CD4-positive, alpha-beta memory T cell (primary cell): ENCODE measurements at regions of chr6 and their contacts with region 1.

Region 1: GRCh38 chr6:43308101-43308989 is at the start of gene CRIP3:
- DNase-seq: peak; percentile 42 to 63 (median 46)
- H3K4me3 ChIP-seq: peak within 1 kb of the TSS; percentile 42 to 43
- H3K4me3 Mint-ChIP-seq: peak within 1 kb of the TSS; percentile 75 to 89 (median 84)
- H3K27ac ChIP-seq: no peak within 1 kb of the TSS
- H3K27ac Mint-ChIP-seq: peak within 1 kb of the TSS in 6 of 7 donors; percentile 17 to 88 (median 52)
- H3K4me1 ChIP-seq: peaks cover 14% of the 10 kb centered on the region
- H3K4me1 Mint-ChIP-seq: peaks cover 3 to 12% (median 8%) of the 10 kb centered on the region in 4 donors
- H3K27me3 ChIP-seq: no peaks in the 10 kb centered on the region
- H3K27me3 Mint-ChIP-seq: no peaks in the 10 kb centered on the region
- total RNA-seq, gene CRIP3: 1.9 to 3.0 TPM

Region 2: GRCh38 chr6:43129434-43130194 is 178.7 kb before region 1 on chr6:
- CTCF ChIA-PET with region 1: no interaction called
- POLR2A ChIA-PET with region 1: no interaction called
- intact Hi-C with region 1: no loop called
- DNase-seq: peak in 1 of 5 donors; percentile 6
- H3K4me3 ChIP-seq: no peak overlapping the region
- H3K4me3 Mint-ChIP-seq: no peak overlapping the region
- H3K27ac ChIP-seq: no peak overlapping the region
- H3K27ac Mint-ChIP-seq: peak overlapping the region in 1 of 7 donors; percentile 17
- H3K4me1 ChIP-seq: no peaks in the 10 kb centered on the region
- H3K4me1 Mint-ChIP-seq: no peaks in the 10 kb centered on the region
- H3K27me3 ChIP-seq: no peaks in the 10 kb centered on the region
- H3K27me3 Mint-ChIP-seq: peaks cover 0 to 2% of the 10 kb centered on the region in 2 donors

Region 3: DNA sequence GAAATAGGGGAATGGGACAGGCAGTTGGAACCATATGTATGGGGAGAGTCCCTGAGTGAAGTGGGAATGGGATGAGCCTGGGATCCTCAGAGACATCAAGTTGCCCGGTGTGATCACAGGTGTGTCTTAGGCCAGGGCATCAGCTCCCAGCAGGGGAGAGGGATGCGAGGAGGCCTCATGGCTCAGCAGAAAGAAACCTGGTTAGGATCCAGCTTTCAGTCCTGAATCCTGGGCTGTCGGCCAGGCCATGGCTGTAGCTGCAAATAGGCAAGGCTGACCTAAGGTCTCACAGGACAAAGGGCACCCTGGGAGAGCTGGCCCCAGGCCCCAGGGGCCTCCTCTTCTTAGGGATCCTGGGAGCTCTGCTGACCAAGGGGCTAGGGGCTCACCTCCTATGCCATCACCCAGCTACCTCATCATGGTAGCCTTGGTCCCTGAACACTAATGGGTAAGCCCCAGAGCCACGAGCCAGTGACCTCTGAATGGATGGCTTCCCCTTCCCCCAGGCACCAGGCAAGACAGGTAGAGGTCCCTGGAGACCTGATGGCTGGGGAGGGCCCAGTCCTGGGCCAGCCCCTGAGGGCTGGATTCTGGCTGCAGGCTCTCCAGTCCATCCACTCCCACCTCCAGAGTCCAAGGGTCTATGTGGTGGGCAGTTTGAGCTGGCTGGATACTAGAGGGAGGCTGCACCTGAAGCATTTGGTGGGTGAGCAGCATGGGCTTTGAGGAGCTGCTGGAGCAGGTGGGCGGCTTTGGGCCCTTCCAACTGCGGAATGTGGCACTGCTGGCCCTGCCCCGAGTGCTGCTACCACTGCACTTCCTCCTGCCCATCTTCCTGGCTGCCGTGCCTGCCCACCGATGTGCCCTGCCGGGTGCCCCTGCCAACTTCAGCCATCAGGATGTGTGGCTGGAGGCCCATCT is 10.4 kb before region 1 on chr6 and contains the start of gene SLC22A7:
- CTCF ChIA-PET with region 1: interaction called, 18 read pairs
- POLR2A ChIA-PET with region 1: interaction called, 3 read pairs
- intact Hi-C with region 1: no loop called
- DNase-seq: no peak
- H3K4me3 ChIP-seq: no peak within 1 kb of the TSS
- H3K4me3 Mint-ChIP-seq: no peak within 1 kb of the TSS
- H3K27ac ChIP-seq: no peak within 1 kb of the TSS
- H3K27ac Mint-ChIP-seq: no peak within 1 kb of the TSS
- H3K4me1 ChIP-seq: no peaks in the 10 kb centered on the region
- H3K4me1 Mint-ChIP-seq: peaks cover 0 to 2% (median 0%) of the 10 kb centered on the region in 4 donors
- H3K27me3 ChIP-seq: no peaks in the 10 kb centered on the region
- H3K27me3 Mint-ChIP-seq: peaks cover 4 to 13% of the 10 kb centered on the region in 2 donors
- total RNA-seq, gene SLC22A7: not detected

Region 4: GRCh38 chr6:43334466-43335095 is 26.2 kb after region 1 on chr6:
- CTCF ChIA-PET with region 1: interaction called, 9 read pairs
- POLR2A ChIA-PET with region 1: interaction called, 3 read pairs
- intact Hi-C with region 1: loop called (anchors 2 kb)
- DNase-seq: peak in 1 of 5 donors; percentile 12
- H3K4me3 ChIP-seq: no peak overlapping the region
- H3K4me3 Mint-ChIP-seq: no peak overlapping the region
- H3K27ac ChIP-seq: no peak overlapping the region
- H3K27ac Mint-ChIP-seq: peak overlapping the region in 6 of 7 donors; percentile 36 to 88 (median 50)
- H3K4me1 ChIP-seq: peaks cover 17% of the 10 kb centered on the region
- H3K4me1 Mint-ChIP-seq: peaks cover 15 to 30% (median 17%) of the 10 kb centered on the region in 4 donors
- H3K27me3 ChIP-seq: no peaks in the 10 kb centered on the region
- H3K27me3 Mint-ChIP-seq: no peaks in the 10 kb centered on the region

Region 5: GRCh38 chr6:43361269-43361668 is 52.9 kb after region 1 on chr6:
- CTCF ChIA-PET with region 1: interaction called, 10 read pairs
- POLR2A ChIA-PET with region 1: no interaction called
- intact Hi-C with region 1: no loop called
- DNase-seq: no peak
- H3K4me3 ChIP-seq: no peak overlapping the region
- H3K4me3 Mint-ChIP-seq: no peak overlapping the region
- H3K27ac ChIP-seq: no peak overlapping the region
- H3K27ac Mint-ChIP-seq: no peak overlapping the region
- H3K4me1 ChIP-seq: peaks cover 8% of the 10 kb centered on the region
- H3K4me1 Mint-ChIP-seq: peaks cover 21 to 46% (median 35%) of the 10 kb centered on the region in 4 donors
- H3K27me3 ChIP-seq: no peaks in the 10 kb centered on the region
- H3K27me3 Mint-ChIP-seq: no peaks in the 10 kb centered on the region

Region 6: DNA sequence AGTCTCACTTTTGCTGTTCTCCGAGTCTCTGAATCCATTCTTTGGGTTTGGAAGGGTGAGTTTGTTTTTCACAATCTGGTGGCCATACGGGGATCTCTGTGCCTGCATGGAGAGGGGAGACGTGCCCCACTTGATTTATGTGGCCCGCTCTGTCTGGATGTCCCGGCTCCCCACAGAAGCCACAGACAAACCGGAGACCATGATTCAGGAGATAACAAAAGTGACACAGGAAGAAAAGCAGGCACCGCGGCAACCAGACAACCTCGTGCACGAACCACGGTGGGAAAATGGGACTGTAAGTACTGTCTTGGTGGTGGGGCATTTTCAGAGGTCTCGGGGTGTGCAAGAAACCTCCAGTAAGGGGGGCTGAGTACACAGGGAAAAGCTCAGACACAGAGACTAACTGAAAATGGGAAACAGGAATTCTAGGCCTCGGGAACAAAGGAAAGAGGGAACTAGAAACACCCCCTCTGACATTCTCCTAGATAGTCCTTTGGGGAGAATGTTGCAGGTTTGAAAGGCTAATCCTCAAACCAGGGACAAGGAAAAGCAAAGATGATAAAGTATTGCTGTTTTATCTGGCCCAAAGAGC is 83.2 kb after region 1 on chr6:
- CTCF ChIA-PET with region 1: interaction called, 49 read pairs
- POLR2A ChIA-PET with region 1: no interaction called
- intact Hi-C with region 1: no loop called
- DNase-seq: peak; percentile 44 to 73 (median 53)
- H3K4me3 ChIP-seq: peak overlapping the region in 1 of 2 donors; percentile 29
- H3K4me3 Mint-ChIP-seq: peak overlapping the region; percentile 12 to 92 (median 82)
- H3K27ac ChIP-seq: no peak overlapping the region
- H3K27ac Mint-ChIP-seq: peak overlapping the region; percentile 29 to 88 (median 65)
- H3K4me1 ChIP-seq: peaks cover 30% of the 10 kb centered on the region
- H3K4me1 Mint-ChIP-seq: peaks cover 24 to 48% (median 34%) of the 10 kb centered on the region in 4 donors
- H3K27me3 ChIP-seq: no peaks in the 10 kb centered on the region
- H3K27me3 Mint-ChIP-seq: peaks cover 0 to 8% of the 10 kb centered on the region in 2 donors